ENCODE measurements at regions of chr10 and their contacts with region 1.

Region 1: GRCh38 chr10:60846173-60846572 is 67.9 kb downstream of the CDK1 start:
- DNase-seq: no peak
- H3K4me3 ChIP-seq: no peak overlapping the region
- H3K27ac ChIP-seq: no peak overlapping the region
- H3K4me1 ChIP-seq: peaks cover 3% of the 10 kb centered on the region; the same call in 1 of the 2 replicates
- H3K27me3 ChIP-seq: no peaks in the 10 kb centered on the region
- CTCF ChIP-seq: no peak

Region 2: DNA sequence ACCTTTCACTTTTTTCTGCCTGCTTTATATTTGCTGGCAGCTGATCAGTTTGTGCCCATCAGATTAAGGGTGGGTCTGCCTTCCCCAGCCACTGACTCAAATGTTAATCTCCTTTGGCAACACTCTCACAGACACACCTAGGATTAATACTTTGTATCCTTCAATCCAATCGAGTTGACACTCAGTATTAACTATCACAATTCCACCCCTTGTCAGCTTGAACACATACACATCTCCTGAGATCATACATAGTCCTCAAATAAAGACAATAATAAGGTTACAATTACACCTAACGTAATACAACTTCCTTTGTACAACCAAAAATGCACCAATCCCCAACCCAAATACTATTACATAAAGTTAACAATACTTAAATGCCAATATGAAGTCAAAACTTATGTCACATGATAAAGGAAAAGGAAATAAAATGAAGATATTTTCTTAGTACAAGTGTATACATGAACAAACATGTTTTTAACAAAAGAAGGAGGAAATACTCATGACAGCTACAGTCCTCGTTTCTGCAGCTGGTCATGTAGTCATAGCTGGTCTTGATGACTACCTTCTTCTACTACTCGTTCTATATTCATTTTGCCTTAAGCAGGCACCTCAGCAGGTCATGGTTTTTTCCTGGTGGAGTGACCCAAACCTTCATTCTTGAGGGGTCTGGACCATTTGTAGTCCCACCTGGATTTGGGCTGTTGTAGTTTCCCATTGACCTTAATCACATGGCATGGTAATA is 719.8 kb after region 1 on chr10:
- CTCF ChIA-PET with region 1: interaction called, 14 read pairs
- POLR2A ChIA-PET with region 1: no interaction called
- intact Hi-C with region 1: no loop called
- DNase-seq: no peak
- H3K4me3 ChIP-seq: no peak overlapping the region
- H3K27ac ChIP-seq: no peak overlapping the region
- H3K4me1 ChIP-seq: no peaks in the 10 kb centered on the region
- H3K27me3 ChIP-seq: no peaks in the 10 kb centered on the region
- CTCF ChIP-seq: no peak

Region 3: GRCh38 chr10:62038609-62039190 is 1192.5 kb after region 1 on chr10:
- CTCF ChIA-PET with region 1: no interaction called
- POLR2A ChIA-PET with region 1: no interaction called
- intact Hi-C with region 1: no loop called
- DNase-seq: peak; percentile 76 to 79
- H3K4me3 ChIP-seq: no peak overlapping the region
- H3K27ac ChIP-seq: peak overlapping the region; percentile 57
- H3K4me1 ChIP-seq: peaks cover 35% of the 10 kb centered on the region
- H3K27me3 ChIP-seq: no peaks in the 10 kb centered on the region
- CTCF ChIP-seq: peak; percentile 90